MCF 10A (cell line): ENCODE measurements at regions of chr12 and their contacts with region 1.

Region 1: DNA sequence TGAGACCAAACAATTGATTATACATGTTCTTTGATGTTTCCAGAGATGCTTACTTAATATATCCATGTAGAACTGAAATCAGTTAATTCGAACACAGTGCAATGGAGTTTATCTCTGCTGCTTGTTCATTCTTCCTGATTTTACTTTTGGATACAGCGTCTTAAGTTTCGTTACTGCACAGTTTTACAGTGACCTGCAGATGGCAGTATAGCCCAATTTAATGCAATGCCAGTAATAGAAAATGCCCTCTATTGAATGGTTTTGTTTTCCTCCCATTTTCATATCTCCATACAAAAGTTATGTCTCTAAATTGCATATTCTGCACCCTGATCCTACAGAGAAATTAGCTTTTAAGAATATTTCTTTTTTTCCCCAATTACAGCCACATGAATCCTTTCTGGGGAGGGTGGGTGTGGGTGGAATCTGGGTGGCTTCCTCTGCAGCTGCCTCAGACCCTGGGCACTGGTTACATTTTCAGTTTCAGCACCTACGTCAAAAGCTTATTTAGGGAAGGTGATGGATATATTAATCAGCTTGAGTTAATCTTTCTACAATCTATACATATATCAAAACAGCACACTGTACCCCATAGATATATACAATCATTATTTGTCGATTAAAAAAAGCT is 101.1 kb upstream of the DCD start:
- DNase-seq: peak; percentile 64
- H3K4me3 Mint-ChIP-seq: no peak overlapping the region
- H3K27ac Mint-ChIP-seq: no peak overlapping the region
- H3K4me1 Mint-ChIP-seq: no peaks in the 10 kb centered on the region
- H3K27me3 Mint-ChIP-seq: peaks cover 45% of the 10 kb centered on the region
- CTCF ChIP-seq: peak; percentile 64

Region 2: GRCh38 chr12:54229624-54230212 is 519.6 kb before region 1 on chr12:
- CTCF ChIA-PET with region 1: no interaction called
- POLR2A ChIA-PET with region 1: no interaction called
- intact Hi-C with region 1: no loop called
- DNase-seq: peak; percentile 96
- H3K4me3 Mint-ChIP-seq: peak overlapping the region; percentile 0
- H3K27ac Mint-ChIP-seq: peak overlapping the region; percentile 83
- H3K4me1 Mint-ChIP-seq: peaks cover 17% of the 10 kb centered on the region
- H3K27me3 Mint-ChIP-seq: no peaks in the 10 kb centered on the region
- CTCF ChIP-seq: no peak

Region 3: DNA sequence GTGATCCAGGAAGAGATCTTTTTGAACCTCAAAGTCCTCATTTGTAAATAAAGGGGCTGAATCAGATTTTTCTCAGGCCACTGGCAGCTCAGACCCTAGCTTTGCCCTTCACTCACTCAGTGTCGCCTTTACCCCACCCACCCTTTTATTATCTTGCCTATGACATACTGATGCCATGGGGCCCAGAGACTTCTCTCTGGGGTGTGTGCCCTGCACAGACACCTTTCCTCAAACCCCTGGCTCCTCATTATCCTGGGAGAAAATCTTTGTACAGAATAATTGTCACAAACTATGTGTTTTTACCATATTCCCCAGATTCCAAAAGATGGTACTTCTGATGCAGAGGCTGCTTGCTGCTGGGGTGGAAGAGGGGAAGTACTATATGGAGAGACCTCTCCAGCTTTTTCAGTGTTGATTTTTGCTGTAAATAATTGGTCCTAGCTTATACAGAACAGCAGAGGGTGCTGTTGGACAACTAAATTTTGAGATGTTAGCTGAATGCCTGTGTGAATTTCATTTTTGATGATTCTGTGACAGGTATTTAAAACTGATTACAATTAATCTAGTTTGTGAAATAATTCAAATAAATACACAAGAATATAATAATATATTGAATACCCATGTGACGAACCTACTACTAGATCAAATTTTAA is 47.2 kb before region 1 on chr12:
- CTCF ChIA-PET with region 1: interaction called, 31 read pairs
- POLR2A ChIA-PET with region 1: no interaction called
- intact Hi-C with region 1: loop called (anchors 1 kb)
- DNase-seq: peak; percentile 60
- H3K4me3 Mint-ChIP-seq: no peak overlapping the region
- H3K27ac Mint-ChIP-seq: no peak overlapping the region
- H3K4me1 Mint-ChIP-seq: no peaks in the 10 kb centered on the region
- H3K27me3 Mint-ChIP-seq: peaks cover 75% of the 10 kb centered on the region
- CTCF ChIP-seq: peak; percentile 45

Region 4: GRCh38 chr12:54734196-54734950 is 14.9 kb before region 1 on chr12:
- CTCF ChIA-PET with region 1: interaction called, 28 read pairs
- POLR2A ChIA-PET with region 1: no interaction called
- intact Hi-C with region 1: no loop called
- DNase-seq: no peak
- H3K4me3 Mint-ChIP-seq: no peak overlapping the region
- H3K27ac Mint-ChIP-seq: no peak overlapping the region
- H3K4me1 Mint-ChIP-seq: no peaks in the 10 kb centered on the region
- H3K27me3 Mint-ChIP-seq: peaks cover 52% of the 10 kb centered on the region
- CTCF ChIP-seq: no peak

Region 5: DNA sequence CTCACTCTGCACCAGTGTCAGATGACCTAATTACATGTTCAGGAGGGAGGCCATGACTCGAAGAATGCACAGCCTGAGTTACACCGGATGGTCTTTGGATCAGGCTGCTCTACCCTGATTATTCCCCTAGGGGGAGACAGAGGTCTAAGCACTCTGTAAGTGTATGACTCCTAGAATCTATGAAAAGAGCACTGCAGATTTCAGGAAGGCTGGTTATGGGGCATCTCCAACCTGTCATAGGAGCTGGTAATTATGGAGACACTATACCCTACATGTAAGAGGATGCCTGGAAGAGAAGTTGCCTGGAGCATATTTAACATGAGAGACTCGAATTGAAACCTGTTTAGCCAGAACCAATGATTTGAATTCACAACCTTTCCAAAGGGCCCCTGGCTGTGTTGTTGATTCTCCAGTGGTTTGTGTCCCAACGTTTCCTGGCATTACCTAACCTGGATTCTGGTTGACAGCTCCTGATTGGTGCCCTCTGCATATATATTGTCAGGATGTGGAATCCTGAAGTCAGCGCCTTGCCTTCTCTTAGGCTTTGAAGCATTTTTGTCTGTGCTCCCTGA is 104.8 kb after region 1 on chr12 and contains the start of gene MUCL1:
- CTCF ChIA-PET with region 1: interaction called, 12 read pairs
- POLR2A ChIA-PET with region 1: no interaction called
- intact Hi-C with region 1: loop called (anchors 2 kb)
- DNase-seq: peak; percentile 83
- H3K4me3 Mint-ChIP-seq: no peak within 1 kb of the TSS
- H3K27ac Mint-ChIP-seq: no peak within 1 kb of the TSS
- H3K4me1 Mint-ChIP-seq: no peaks in the 10 kb centered on the region
- H3K27me3 Mint-ChIP-seq: no peaks in the 10 kb centered on the region
- CTCF ChIP-seq: peak; percentile 86
- total RNA-seq, gene MUCL1: not detected in 2 replicates

Region 6: GRCh38 chr12:54958048-54958658 is 208.8 kb after region 1 on chr12:
- CTCF ChIA-PET with region 1: interaction called, 116 read pairs
- POLR2A ChIA-PET with region 1: no interaction called
- intact Hi-C with region 1: loop called (anchors 1 kb)
- DNase-seq: peak; percentile 71
- H3K4me3 Mint-ChIP-seq: no peak overlapping the region
- H3K27ac Mint-ChIP-seq: no peak overlapping the region
- H3K4me1 Mint-ChIP-seq: no peaks in the 10 kb centered on the region
- H3K27me3 Mint-ChIP-seq: peaks cover 48% of the 10 kb centered on the region
- CTCF ChIP-seq: peak; percentile 71